Activated T-helper 2 cell treated with anti-CD3 and anti-CD28 coated beads, Interferon-gamma antibody, Interleukin-2, Interleukin-4, amounts not matched to agents 10 μg/mL and 5 μg/mL and 100 μg/mL, durations not matched to agents 14 hours and 24 hours and 36 hours (primary cell): ENCODE measurements at regions of chr12 and their contacts with region 1.

Region 1: GRCh38 chr12:12201274-12201758 is 65.5 kb downstream of the LRP6 start:
- DNase-seq: no peak
- H3K4me3 Mint-ChIP-seq: no peak overlapping the region
- H3K27ac Mint-ChIP-seq: no peak overlapping the region
- H3K4me1 Mint-ChIP-seq: peaks cover 9% of the 10 kb centered on the region
- H3K27me3 Mint-ChIP-seq: peaks cover 50% of the 10 kb centered on the region

Region 2: DNA sequence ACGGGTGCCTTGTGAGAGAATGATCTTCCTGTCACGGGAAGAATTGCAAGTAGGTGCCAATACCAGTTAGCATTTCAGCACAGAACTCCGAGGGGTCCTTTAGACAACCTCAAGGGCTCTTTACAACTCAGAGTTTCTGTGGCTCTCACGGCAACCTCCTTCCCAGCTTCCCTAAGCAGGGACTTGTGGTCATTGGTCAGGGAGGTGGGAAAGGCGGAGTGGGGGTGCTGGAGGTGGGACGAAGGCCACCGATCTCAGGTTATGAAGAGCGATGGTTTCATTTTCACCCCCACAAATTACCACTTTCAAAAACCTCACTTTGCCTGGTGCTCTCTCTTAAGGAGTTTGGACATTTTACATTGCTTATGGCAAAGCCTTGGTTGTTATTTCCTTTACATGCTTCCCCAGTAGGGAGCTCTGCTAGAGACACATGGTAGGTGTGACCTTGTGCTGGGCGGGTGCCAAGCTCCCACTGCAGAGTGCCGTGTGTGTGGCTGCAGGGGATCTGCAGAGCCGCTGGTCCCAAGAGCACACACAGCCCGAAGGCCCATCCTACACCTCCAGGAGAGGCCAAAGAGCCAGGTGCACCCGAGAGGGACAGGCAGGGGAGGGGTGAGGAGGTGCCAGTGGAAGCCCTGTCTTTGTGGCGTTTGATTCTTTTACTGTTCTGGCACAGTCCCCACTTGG is 109.2 kb before region 1 on chr12:
- intact Hi-C with region 1: no loop called
- DNase-seq: no peak
- H3K4me3 Mint-ChIP-seq: no peak overlapping the region
- H3K27ac Mint-ChIP-seq: no peak overlapping the region
- H3K4me1 Mint-ChIP-seq: no peaks in the 10 kb centered on the region
- H3K27me3 Mint-ChIP-seq: peaks cover 12% of the 10 kb centered on the region

Region 3: GRCh38 chr12:12126551-12126950 is 74.8 kb before region 1 on chr12:
- intact Hi-C with region 1: no loop called
- DNase-seq: no peak
- H3K4me3 Mint-ChIP-seq: no peak overlapping the region
- H3K27ac Mint-ChIP-seq: no peak overlapping the region
- H3K4me1 Mint-ChIP-seq: peaks cover 3% of the 10 kb centered on the region
- H3K27me3 Mint-ChIP-seq: peaks cover 15% of the 10 kb centered on the region

Region 4: DNA sequence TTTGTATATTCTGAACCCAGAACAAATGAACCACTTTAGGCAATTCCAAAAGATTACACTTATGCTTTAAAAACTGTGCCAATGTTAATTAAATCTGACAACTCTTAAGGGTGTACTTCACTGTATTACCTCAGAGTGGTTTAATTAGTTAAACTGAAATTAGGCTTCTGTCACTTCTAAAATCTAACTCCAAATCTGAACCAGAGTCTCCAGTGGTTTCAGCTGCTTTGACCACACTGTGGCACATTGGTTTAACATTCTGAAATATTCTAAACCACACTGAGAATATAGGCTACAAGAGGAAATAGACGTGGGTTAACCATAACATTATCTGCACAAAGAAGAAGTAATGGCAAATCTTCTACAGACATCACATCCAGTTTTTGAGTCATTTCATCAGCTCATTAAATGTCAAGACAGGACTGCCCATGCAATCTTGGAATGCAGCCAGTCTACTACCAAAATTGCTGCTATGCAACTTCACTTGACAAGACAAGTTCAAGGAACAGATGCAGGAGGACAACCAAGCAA is 29.3 kb before region 1 on chr12:
- intact Hi-C with region 1: loop called (anchors 1 kb)
- DNase-seq: peak; percentile 16
- H3K4me3 Mint-ChIP-seq: no peak overlapping the region
- H3K27ac Mint-ChIP-seq: no peak overlapping the region
- H3K4me1 Mint-ChIP-seq: peaks cover 13% of the 10 kb centered on the region
- H3K27me3 Mint-ChIP-seq: peaks cover 58% of the 10 kb centered on the region